Activated CD4-positive, alpha-beta memory T cell treated with anti-CD3 and anti-CD28 coated beads for 36 hours (primary cell): ENCODE measurements at regions of chrX and their contacts with region 1.

Region 1: GRCh38 chrX:1453951-1454785 is 1.5 kb upstream of the ASMTL start:
- DNase-seq: peak; percentile 95
- H3K4me3 Mint-ChIP-seq: peak overlapping the region; percentile 52
- H3K27ac Mint-ChIP-seq: peak overlapping the region; percentile 64
- H3K4me1 Mint-ChIP-seq: peaks cover 19% of the 10 kb centered on the region
- H3K27me3 Mint-ChIP-seq: no peaks in the 10 kb centered on the region

Region 2: GRCh38 chrX:318739-319578 is 1135.2 kb before region 1 on chrX and contains the start of gene GTPBP6:
- CTCF ChIA-PET with region 1: no interaction called
- POLR2A ChIA-PET with region 1: no interaction called
- intact Hi-C with region 1: loop called (anchors 2 kb)
- DNase-seq: peak; percentile 99
- H3K4me3 Mint-ChIP-seq: peak within 1 kb of the TSS; percentile 91
- H3K27ac Mint-ChIP-seq: peak within 1 kb of the TSS; percentile 99
- H3K4me1 Mint-ChIP-seq: peaks cover 23% of the 10 kb centered on the region
- H3K27me3 Mint-ChIP-seq: no peaks in the 10 kb centered on the region
- total RNA-seq, gene GTPBP6: 60.0 to 62.4 TPM

Region 3: GRCh38 chrX:1246816-1247215 is 207.4 kb before region 1 on chrX:
- CTCF ChIA-PET with region 1: no interaction called
- POLR2A ChIA-PET with region 1: no interaction called
- intact Hi-C with region 1: loop called (anchors 2 kb)
- DNase-seq: peak; percentile 91
- H3K4me3 Mint-ChIP-seq: no peak overlapping the region
- H3K27ac Mint-ChIP-seq: peak overlapping the region; percentile 69
- H3K4me1 Mint-ChIP-seq: peaks cover 29% of the 10 kb centered on the region
- H3K27me3 Mint-ChIP-seq: no peaks in the 10 kb centered on the region

Region 4: DNA sequence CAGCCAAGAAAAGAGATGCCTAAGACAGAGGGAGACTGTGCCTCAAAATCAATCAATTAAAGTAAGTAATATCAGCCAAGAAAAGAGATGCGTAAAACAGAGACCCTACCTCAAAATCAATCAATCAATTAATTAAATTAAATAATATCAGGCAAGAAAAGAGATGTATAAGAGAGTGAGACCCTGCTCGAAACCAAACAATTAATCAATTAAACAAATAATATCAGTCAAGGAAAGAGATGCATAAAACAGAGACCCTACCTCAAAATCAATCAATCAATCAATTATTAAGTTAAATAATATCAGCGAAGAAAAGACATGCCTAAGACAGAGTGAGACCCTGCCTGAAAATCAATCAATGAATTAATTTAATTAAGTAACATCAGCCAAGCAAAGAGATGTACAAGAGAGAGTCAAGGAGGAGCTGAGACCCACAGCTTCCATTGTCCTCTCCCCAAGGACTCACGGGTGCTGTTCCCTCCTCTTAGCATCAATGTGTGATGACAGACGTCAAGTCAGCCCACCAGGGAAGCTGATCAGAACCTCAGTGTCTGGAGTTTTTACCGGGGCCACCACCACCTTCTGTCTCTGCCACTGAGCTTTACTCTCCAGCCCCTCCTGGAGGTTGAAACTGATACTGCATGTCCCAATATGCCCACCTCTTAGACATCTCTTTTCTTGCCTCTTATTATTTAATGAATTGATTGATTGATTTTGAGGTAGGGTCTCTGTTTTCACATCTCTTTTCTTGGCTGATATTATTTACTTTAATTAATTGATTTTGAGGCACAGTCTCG is 126.8 kb after region 1 on chrX:
- CTCF ChIA-PET with region 1: no interaction called
- POLR2A ChIA-PET with region 1: no interaction called
- intact Hi-C with region 1: loop called (anchors 1 kb)
- DNase-seq: peak; percentile 88
- H3K4me3 Mint-ChIP-seq: peak overlapping the region; percentile 50
- H3K27ac Mint-ChIP-seq: peak overlapping the region; percentile 38
- H3K4me1 Mint-ChIP-seq: peaks cover 27% of the 10 kb centered on the region
- H3K27me3 Mint-ChIP-seq: no peaks in the 10 kb centered on the region

Region 5: DNA sequence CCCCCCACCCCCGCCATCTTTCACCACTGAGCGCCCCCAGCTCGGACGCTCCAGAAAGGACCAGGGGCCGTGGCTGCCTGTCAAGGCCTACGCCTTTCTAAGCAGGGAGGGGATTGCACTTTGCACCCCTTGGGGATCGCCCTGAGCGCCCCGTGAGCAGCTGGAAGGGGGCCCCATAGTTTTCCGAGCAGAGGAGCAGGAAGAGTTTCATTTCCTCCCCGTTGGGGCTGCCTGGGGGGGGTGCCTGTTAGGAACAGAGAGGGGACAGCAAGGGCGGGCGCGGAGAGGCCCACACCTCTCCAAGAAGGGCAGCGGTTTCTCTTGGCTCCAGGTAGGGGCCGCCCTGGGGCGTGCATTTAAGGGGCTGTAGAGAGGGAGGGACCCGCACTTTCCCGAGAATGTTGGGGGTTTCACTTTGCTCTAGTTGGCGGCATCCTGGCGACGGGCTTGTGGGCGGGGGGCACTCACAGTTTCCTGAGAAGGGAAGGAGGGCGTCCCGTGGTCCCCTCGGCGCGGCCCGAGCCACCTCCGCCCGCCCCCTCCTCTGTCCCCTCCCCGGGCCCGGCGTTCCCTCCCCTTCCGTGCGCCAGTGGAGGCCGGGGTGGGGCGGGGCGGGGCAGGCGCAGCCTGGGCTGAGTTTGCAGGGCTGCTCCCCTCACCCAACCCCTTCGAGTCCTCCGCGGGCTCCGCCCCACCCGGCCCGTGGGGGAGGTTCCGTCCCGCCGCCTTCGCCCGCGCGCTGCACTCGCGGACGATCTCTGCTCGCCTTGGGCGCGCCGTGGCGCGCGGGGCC is 1154.7 kb after region 1 on chrX:
- CTCF ChIA-PET with region 1: no interaction called
- POLR2A ChIA-PET with region 1: no interaction called
- intact Hi-C with region 1: loop called (anchors 1 kb)
- DNase-seq: peak; percentile 92
- H3K4me3 Mint-ChIP-seq: peak overlapping the region; percentile 82
- H3K27ac Mint-ChIP-seq: peak overlapping the region; percentile 87
- H3K4me1 Mint-ChIP-seq: peaks cover 45% of the 10 kb centered on the region
- H3K27me3 Mint-ChIP-seq: no peaks in the 10 kb centered on the region